HEK293 (cell line): ENCODE measurements at regions of chr18 and their contacts with region 1.

Region 1: DNA sequence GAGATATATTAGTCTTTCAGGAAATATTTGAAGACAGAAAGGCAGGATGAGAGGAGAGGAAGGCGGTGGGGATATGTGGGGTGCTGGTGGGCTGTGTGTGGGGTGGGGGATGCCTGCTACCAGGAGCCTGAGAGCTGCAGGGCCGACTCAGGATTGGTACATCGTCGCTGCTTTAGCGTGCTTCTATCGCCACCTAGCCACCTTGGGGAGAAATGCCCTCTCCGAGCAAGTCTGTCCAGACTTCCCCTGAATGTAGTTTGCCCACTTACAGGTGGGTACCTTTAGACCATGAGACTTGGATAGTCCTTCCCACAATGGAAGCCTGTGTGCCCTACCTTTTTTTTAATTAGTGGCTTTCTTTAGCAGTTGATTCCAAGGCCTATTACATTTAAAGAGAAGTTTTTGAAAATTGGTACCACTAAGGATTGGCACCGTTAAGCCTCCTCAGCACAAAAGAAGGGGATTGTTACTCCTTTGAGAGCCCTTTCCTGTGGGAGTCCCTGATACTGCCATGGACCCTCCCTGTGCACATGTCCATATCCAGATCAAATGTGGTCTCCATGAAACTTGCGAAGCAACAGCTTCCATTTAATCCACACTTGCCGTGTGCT is 114.1 kb upstream of the NDUFV2 start:
- H3K4me3 ChIP-seq: no peak overlapping the region
- H3K27ac ChIP-seq: no peak overlapping the region
- H3K4me1 ChIP-seq: no peaks in the 10 kb centered on the region
- CTCF ChIP-seq: peak; percentile 78

Region 2: DNA sequence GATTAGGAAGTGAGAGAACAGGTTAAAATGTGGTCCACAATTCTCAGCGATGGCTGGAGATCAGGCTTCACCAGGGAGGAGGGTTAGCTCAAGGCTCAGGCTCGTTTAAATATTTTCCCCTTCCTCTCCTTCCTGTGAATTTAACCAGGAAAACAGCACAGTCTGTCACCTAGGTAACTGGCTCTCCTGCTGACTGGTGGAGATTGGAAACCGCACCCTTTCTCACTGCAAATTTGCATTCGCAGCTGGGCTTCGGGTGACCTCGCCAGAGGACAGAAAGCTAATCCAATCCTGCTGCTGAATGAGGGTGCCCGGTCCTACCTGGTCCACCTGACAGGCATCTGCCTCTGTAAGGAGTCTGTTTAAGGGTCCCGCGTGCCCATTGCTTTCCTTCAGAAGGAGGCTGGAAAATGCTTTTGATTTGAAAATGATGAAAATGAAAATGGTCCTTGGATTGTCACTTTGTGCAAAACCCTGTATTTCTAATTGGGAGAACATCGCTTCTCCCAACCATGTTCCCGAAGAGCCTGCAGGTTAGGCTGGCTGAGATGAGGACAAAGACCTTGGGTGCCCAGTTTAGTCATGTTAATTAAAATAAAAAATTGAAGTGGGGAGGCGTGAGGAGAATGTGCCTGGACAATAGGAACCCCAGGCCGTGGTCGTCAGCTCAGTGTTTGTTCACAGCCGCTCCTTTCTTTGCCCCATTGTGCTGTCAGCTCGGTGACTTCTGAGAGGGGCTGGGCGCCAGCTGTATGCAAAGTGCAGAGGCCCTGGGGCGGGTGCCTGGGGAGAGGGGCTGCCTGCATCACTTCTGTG is 326.4 kb before region 1 on chr18:
- CTCF ChIA-PET with region 1: interaction called, 98 read pairs
- POLR2A ChIA-PET with region 1: no interaction called
- H3K4me3 ChIP-seq: no peak overlapping the region
- H3K27ac ChIP-seq: no peak overlapping the region
- H3K4me1 ChIP-seq: peaks cover 3% of the 10 kb centered on the region; the same call in 1 of the 2 replicates
- CTCF ChIP-seq: no peak

Region 3: GRCh38 chr18:8704361-8705279 is 283.7 kb before region 1 on chr18:
- CTCF ChIA-PET with region 1: interaction called, 13 read pairs
- POLR2A ChIA-PET with region 1: no interaction called
- H3K4me3 ChIP-seq: peak overlapping the region; percentile 43
- H3K27ac ChIP-seq: peak overlapping the region; percentile 57; the same call in 1 of the 2 replicates
- H3K4me1 ChIP-seq: peaks cover 6% of the 10 kb centered on the region
- CTCF ChIP-seq: peak; percentile 53; the same call in 1 of the 2 replicates

Region 4: GRCh38 chr18:8949206-8949605 is 39.2 kb before region 1 on chr18:
- CTCF ChIA-PET with region 1: no interaction called
- POLR2A ChIA-PET with region 1: no interaction called
- H3K4me3 ChIP-seq: no peak overlapping the region
- H3K27ac ChIP-seq: no peak overlapping the region
- H3K4me1 ChIP-seq: no peaks in the 10 kb centered on the region
- CTCF ChIP-seq: no peak

Region 5: GRCh38 chr18:8963876-8964275 is 24.5 kb before region 1 on chr18:
- CTCF ChIA-PET with region 1: no interaction called
- POLR2A ChIA-PET with region 1: no interaction called
- H3K4me3 ChIP-seq: no peak overlapping the region
- H3K27ac ChIP-seq: no peak overlapping the region
- H3K4me1 ChIP-seq: no peaks in the 10 kb centered on the region
- CTCF ChIP-seq: no peak

Region 6: DNA sequence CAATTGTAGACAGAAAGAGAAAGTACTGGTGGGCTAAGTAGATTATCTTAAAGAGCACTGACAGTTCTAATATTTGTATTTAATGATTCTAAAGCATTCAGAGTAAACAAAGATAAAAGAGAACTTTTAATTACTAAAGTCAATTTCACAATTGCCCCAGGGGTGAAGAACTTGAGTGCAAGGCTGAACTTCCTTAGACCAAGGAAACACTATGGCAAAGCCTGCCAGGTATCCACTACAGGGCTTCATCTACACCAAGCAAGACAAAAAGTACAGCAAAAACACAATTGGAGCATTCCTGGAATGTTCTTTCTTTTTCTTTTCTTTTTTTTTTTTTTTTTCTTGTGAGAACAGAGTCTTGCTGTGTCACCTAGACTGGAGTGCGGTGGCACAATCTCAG is 67.3 kb after region 1 on chr18:
- CTCF ChIA-PET with region 1: interaction called, 11 read pairs
- POLR2A ChIA-PET with region 1: no interaction called
- H3K4me3 ChIP-seq: no peak overlapping the region
- H3K27ac ChIP-seq: no peak overlapping the region
- H3K4me1 ChIP-seq: no peaks in the 10 kb centered on the region
- CTCF ChIP-seq: no peak

Region 7: GRCh38 chr18:9217743-9218451 is 229.5 kb after region 1 on chr18:
- CTCF ChIA-PET with region 1: no interaction called
- POLR2A ChIA-PET with region 1: no interaction called
- H3K4me3 ChIP-seq: no peak overlapping the region
- H3K27ac ChIP-seq: no peak overlapping the region
- H3K4me1 ChIP-seq: no peaks in the 10 kb centered on the region
- CTCF ChIP-seq: no peak